ENCODE measurements at regions of chr10 and their contacts with region 1.

Region 1: GRCh38 chr10:71893920-71894319 is 42.9 kb upstream of the PSAP start:
- DNase-seq: no peak
- ATAC-seq: no peak

Region 2: DNA sequence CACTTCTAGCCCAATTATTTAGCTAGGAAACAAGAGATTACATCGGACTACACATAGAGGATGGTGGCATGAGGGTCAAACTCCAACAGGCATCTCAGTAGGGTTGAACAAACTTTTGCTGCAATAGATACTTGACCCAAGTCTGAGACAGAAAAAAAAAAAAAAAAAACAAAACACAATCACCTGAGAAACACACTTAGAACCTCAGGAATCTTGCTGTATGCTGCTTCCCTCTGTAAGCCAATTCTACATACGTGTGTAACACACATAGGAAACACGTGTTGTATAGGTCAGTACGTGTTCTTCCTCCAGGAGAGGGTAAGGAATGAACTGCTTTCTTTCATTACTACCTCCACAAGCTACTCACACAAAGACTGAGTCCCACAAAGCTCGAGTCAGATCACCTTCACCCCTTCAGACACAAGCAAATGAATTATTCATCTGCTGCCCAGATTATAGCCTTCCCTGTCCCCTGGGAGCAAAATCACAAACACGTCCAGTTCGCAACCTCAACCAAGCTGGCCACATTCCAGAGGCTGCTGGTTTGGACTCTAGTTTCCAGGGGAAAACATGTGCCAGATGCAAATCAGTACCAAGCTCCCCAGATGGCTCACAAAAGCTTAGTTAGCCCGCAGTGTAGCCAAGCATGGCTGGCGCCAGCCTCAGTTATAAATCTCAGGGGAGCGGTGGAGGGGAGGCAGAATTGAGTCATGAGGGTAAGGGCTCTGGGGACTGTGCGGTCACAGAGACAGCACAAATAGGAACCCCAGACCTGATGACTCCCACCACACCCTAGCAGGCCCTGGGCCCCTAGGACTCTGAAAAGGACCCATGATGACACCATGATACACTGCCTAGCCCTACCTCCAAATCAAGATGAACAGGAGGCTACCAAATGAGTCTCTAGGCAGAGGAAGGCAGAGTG is 58.0 kb before region 1 on chr10:
- intact Hi-C with region 1: loop called in 1 of 2 experiments (anchors 10 kb)
- DNase-seq: peak in 1 of 2 donors; percentile 49
- ATAC-seq: no peak

Measured in left colon (tissue), 2 donors.